ENCODE measurements at regions of chr14 and their contacts with region 1.

Region 1: DNA sequence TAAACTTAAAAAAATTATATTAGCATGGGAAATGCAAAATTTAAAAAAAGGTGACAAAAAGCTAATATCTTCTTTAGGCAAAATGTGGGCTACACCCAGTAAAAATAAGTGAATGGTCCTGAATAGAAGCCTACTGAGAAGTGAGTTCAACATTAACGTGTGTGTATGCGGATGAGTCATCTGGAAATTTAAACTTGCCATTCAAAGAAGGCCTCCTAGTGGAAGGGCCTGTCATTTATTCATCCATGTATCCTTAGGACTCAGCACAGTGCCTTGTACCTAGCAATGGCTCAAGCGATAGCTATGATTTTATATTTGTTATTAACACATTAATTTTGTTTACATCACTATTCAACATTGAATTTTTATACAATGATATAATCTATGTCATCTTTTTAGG is 226.2 kb downstream of the NUBPL start:
- DNase-seq: peak; percentile 4 to 21 (median 6)
- ATAC-seq: peak; percentile 71
- H3K4me3 ChIP-seq: no peak overlapping the region
- H3K27ac ChIP-seq: no peak overlapping the region
- H3K4me1 ChIP-seq: no peaks in the 10 kb centered on the region
- H3K27me3 ChIP-seq: no peaks in the 10 kb centered on the region
- CTCF ChIP-seq: peak in 2 of 3 experiments; percentile 9 to 36; a peak in 2 of 6 replicates
- EP300 ChIP-seq: no peak
- POLR2A ChIP-seq: no peak
- RAD21 ChIP-seq: peak in 1 of 2 experiments; percentile 40; a peak in 2 of 4 replicates

Region 2: DNA sequence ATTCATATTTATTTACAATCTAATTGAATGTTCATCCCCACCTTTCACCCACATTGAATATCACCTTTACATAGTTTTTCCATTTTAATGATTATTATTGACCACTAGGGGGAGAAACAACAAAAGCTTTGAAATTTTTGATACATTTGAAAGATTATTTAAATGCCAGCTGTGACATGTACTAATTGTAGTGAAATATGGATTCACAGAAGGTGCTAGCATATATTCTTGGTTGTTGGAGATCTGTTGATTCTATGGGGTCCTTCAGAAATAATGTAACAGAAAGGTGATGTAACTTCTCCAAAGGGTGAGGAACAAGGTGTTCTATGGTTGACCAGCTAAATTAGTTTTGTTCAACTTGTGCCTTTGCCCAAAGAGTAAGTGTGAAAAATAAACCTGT is 277.2 kb before region 1 on chr14:
- CTCF ChIA-PET with region 1: no interaction called
- POLR2A ChIA-PET with region 1: no interaction called
- in situ Hi-C with region 1: no loop called
- intact Hi-C with region 1: loop called (anchors 10 kb)
- DNase-seq: peak; percentile 9 to 21 (median 14)
- ATAC-seq: no peak
- H3K4me3 ChIP-seq: no peak overlapping the region
- H3K27ac ChIP-seq: no peak overlapping the region
- H3K4me1 ChIP-seq: no peaks in the 10 kb centered on the region
- H3K27me3 ChIP-seq: no peaks in the 10 kb centered on the region; a peak in 1 of 5 replicates
- CTCF ChIP-seq: peak in 2 of 3 experiments; percentile 9 to 49; a peak in 3 of 6 replicates
- EP300 ChIP-seq: no peak
- POLR2A ChIP-seq: no peak
- RAD21 ChIP-seq: peak; percentile 41 to 70; a peak in 3 of 4 replicates